Activated naive CD4-positive, alpha-beta T cell treated with anti-CD3 and anti-CD28 coated beads, Interleukin-2, amount 10 ng/mL, durations not matched to agents 7 days and 5 days (primary cell): ENCODE measurements at regions of chr6 and their contacts with region 1.

Region 1: DNA sequence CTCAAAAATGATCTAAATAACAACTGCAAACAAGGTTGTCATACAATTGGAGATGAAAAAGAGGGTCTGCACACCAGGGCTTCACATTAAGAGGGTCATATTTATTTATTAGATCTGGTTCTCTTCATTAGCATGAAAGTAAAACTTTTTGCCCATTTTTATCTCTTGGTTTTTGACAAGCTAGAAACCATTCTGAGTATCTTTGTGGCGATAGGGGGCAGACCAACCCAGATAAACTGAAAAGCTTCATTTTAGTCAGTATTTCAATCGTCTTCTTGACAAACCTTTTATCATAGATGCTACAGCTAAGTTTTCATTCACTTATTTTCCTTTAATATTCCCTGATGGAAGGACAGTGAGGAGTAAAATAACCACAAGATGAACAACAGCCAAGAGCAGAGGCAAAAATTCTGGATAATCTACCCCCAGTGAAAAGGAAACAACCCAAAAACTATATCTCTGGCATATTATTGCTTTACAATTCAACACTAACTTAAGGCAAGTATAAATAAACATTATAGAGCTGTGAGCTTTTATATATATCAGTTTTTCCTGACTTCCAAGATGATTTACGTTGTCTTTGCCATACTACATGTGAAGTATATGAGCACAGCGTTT is 45.2 kb downstream of the THEMIS start:
- DNase-seq: peak; percentile 55
- H3K4me3 Mint-ChIP-seq: no peak overlapping the region
- H3K27ac Mint-ChIP-seq: no peak overlapping the region
- H3K4me1 Mint-ChIP-seq: peaks cover 56% of the 10 kb centered on the region
- H3K27me3 Mint-ChIP-seq: no peaks in the 10 kb centered on the region

Region 2: GRCh38 chr6:127737009-127737486 is 118.6 kb before region 1 on chr6:
- CTCF ChIA-PET with region 1: interaction called, 11 read pairs
- DNase-seq: peak; percentile 48
- H3K4me3 Mint-ChIP-seq: no peak overlapping the region
- H3K27ac Mint-ChIP-seq: peak overlapping the region; percentile 34
- H3K4me1 Mint-ChIP-seq: peaks cover 10% of the 10 kb centered on the region
- H3K27me3 Mint-ChIP-seq: no peaks in the 10 kb centered on the region

Region 3: DNA sequence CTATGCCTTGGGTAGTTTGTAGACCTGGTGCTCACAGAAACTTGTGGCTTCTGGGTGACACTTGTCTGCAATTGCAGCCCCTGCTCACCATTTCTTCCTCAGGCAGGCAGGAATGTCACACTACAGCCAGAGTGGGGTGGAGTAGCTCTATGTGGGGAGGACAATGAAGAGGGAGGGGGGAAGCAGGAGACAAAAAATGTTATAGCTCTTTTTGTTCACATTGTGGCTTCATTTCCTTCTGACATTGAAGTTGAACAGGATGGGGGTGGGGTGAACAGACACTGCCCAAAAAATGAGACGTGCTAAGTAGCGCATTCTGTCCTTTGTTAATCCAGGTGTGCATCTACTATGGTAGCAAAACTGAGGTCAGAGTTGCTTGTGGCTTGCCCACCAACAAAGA is 45.3 kb after region 1 on chr6 and contains the start of gene THEMIS:
- CTCF ChIA-PET with region 1: interaction called, 19 read pairs
- DNase-seq: peak; percentile 74
- H3K4me3 Mint-ChIP-seq: peak within 1 kb of the TSS; percentile 95
- H3K27ac Mint-ChIP-seq: peak within 1 kb of the TSS; percentile 95
- H3K4me1 Mint-ChIP-seq: peaks cover 61% of the 10 kb centered on the region
- H3K27me3 Mint-ChIP-seq: no peaks in the 10 kb centered on the region

Region 4: DNA sequence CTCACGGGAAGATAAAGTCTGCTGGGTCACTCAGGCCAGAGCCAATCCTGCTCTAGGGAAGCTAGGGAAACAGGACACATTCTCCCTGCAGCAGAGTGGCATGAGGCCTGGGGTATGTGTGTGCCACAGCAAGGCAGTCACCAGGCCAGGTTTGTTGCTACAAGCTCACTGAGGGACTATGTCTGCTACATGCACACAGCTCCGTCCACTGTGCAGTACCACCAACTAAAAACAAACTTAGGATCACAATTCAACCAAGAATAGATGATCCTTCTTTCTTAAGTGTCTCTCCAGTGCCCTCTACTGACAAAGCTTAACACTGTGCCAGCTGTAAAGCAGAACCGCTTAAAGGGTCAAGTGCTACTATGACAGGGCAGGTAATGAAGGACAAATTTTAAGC is 472.2 kb after region 1 on chr6:
- CTCF ChIA-PET with region 1: interaction called, 37 read pairs
- DNase-seq: peak; percentile 50
- H3K4me3 Mint-ChIP-seq: no peak overlapping the region
- H3K27ac Mint-ChIP-seq: no peak overlapping the region
- H3K4me1 Mint-ChIP-seq: no peaks in the 10 kb centered on the region
- H3K27me3 Mint-ChIP-seq: no peaks in the 10 kb centered on the region